CD8-positive, alpha-beta T cell (primary cell): ENCODE measurements at regions of chr3 and their contacts with region 1.

Region 1: DNA sequence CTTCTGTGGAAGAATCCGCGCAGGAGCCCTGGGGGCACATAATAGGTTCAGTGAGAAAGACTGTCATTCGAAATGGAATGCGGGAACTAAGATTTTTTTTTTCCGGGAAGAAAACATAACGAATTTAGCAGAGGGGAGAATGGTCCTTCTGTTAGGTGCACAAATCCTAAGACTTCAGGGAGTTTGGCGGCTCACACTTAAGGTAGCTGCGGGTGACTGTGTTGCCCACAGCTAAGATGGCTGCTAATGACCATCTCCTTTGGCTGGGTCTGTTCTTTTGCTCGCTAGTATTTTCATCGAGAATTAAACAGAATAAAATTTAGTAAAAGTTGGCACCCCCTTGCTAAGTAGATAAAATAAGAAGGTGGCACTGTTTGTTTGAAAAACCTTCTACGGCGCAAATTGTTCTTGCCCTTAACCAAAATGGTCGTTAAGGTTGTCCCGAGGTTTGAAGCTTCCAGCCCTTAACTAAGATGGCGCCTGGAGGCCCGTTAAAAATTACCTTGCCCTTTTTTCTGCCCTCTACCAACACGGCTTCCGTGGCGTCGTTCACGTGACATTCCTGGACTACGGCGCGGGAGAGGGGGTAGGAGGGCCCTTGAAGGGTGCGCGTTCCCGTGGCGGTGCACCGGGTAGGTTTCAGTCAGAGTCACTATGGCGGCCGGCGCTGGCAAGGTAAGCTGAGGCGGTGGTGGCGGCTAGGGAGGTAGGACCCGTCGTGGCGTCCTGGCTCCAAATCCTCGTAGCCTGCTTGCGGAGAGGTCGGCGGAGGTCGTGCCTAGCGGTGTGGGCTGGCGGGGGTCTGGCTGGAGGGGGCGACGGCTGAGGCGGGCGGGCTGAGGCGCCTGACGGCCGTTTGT is at the start of gene SLMAP:
- DNase-seq: peak; percentile 93 to 98 (median 96)
- ATAC-seq: peak; percentile 92
- H3K4me3 ChIP-seq: peak within 1 kb of the TSS; percentile 69 to 80
- H3K4me3 Mint-ChIP-seq: peak within 1 kb of the TSS; percentile 97
- H3K27ac ChIP-seq: peak within 1 kb of the TSS; percentile 45 to 79
- H3K27ac Mint-ChIP-seq: peak within 1 kb of the TSS; percentile 95
- H3K4me1 ChIP-seq: peaks cover 34% of the 10 kb centered on the region
- H3K4me1 Mint-ChIP-seq: peaks cover 44% of the 10 kb centered on the region
- H3K27me3 ChIP-seq: no peaks in the 10 kb centered on the region
- H3K27me3 Mint-ChIP-seq: no peaks in the 10 kb centered on the region
- CTCF ChIP-seq: no peak
- total RNA-seq, gene SLMAP: 55.0 to 56.7 TPM

Region 2: DNA sequence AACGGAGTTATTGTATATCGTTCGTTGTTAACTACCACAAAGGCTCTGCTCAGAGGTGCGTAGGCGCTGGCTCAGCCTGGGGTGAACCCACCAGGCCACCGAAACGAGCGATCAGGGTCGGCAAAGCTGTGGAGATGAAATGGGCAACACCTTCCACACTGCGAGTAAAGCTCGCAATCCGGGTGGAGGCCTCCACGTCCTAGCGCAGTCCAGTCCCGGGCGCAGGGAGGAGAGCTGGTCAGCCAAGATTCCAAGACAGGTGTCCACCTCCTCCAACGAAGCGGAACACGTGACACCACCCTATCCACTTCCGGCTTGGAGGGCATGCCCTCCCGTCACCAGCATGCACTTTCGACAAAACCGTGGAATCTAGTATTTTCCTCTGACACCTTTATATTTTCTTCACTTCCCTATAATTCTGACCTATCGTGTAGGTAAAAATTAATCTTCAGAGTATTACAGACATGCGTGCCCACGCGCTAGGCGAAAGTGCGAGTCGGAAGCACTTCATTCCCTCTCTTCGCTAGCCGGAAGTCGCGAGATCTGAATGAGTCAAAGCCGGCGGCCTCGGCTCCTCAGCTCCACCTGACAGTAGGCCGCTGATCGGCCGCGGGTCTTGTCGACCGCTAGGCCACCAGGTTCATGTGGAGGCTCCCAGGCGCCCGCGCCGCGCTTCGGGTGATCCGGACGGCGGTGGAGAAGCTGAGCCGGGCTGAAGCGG is 200.0 kb before region 1 on chr3 and contains the start of gene PDE12:
- CTCF ChIA-PET with region 1: no interaction called
- POLR2A ChIA-PET with region 1: interaction called, 8 read pairs
- intact Hi-C with region 1: loop called (anchors 1 kb)
- DNase-seq: peak; percentile 66 to 91 (median 81)
- ATAC-seq: peak; percentile 69
- H3K4me3 ChIP-seq: peak within 1 kb of the TSS; percentile 77 to 96
- H3K4me3 Mint-ChIP-seq: peak within 1 kb of the TSS; percentile 88
- H3K27ac ChIP-seq: peak within 1 kb of the TSS; percentile 87 to 98
- H3K27ac Mint-ChIP-seq: peak within 1 kb of the TSS; percentile 99
- H3K4me1 ChIP-seq: peaks cover 31% of the 10 kb centered on the region
- H3K4me1 Mint-ChIP-seq: peaks cover 40% of the 10 kb centered on the region
- H3K27me3 ChIP-seq: no peaks in the 10 kb centered on the region
- H3K27me3 Mint-ChIP-seq: no peaks in the 10 kb centered on the region
- CTCF ChIP-seq: no peak
- total RNA-seq, gene PDE12: 44.8 to 45.9 TPM

Region 3: GRCh38 chr3:57692259-57693147 is 63.4 kb before region 1 on chr3 and contains the start of gene DENND6A:
- CTCF ChIA-PET with region 1: no interaction called
- POLR2A ChIA-PET with region 1: interaction called, 25 read pairs
- intact Hi-C with region 1: loop called (anchors 1 kb)
- DNase-seq: peak; percentile 91 to 98 (median 96)
- ATAC-seq: peak; percentile 73
- H3K4me3 ChIP-seq: peak within 1 kb of the TSS; percentile 55 to 78
- H3K4me3 Mint-ChIP-seq: peak within 1 kb of the TSS; percentile 92
- H3K27ac ChIP-seq: peak within 1 kb of the TSS; percentile 69 to 95
- H3K27ac Mint-ChIP-seq: peak within 1 kb of the TSS; percentile 89
- H3K4me1 ChIP-seq: peaks cover 45% of the 10 kb centered on the region
- H3K4me1 Mint-ChIP-seq: peaks cover 42% of the 10 kb centered on the region
- H3K27me3 ChIP-seq: no peaks in the 10 kb centered on the region
- H3K27me3 Mint-ChIP-seq: no peaks in the 10 kb centered on the region
- CTCF ChIP-seq: no peak
- total RNA-seq, gene DENND6A: 74.6 to 79.3 TPM

Region 4: DNA sequence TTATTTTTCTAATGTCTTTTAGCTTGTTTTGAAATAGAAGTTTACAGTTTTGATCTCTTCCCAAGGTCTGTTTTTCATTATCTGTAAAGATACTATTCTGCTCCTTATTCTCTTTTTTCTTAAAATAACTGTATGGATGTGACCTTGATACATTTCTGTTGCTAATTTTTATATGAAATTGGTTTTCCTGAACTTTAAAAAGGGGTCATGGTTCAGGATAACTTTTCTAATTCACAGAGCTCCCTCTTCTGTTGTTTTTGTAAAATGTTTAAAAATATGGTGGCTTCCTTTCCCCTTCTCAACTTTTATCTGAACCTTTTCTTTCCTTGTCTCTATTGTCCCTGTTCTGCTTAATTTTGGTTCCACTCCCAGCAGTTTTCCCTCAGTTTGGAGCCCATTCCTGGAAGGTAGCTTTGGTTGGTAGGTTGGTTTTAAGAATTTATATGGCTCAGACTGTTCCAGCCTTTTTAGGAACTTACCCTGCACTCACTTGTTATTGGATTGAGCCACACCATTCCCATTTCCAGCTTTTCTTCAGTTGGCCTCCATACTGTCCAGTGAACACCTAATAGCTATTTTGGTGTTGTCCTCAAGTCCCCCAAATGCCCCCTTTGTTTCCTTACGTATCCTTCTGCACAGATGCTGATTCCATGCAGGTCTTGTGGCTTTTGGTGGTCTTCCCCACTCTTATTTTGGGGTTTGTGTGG is 70.5 kb after region 1 on chr3:
- CTCF ChIA-PET with region 1: no interaction called
- POLR2A ChIA-PET with region 1: no interaction called
- intact Hi-C with region 1: loop called in 1 of 2 experiments (anchors 2 kb)
- DNase-seq: no peak
- ATAC-seq: no peak
- H3K4me3 ChIP-seq: no peak overlapping the region
- H3K4me3 Mint-ChIP-seq: no peak overlapping the region
- H3K27ac ChIP-seq: no peak overlapping the region
- H3K27ac Mint-ChIP-seq: no peak overlapping the region
- H3K4me1 ChIP-seq: no peaks in the 10 kb centered on the region
- H3K4me1 Mint-ChIP-seq: peaks cover 24% of the 10 kb centered on the region
- H3K27me3 ChIP-seq: no peaks in the 10 kb centered on the region
- H3K27me3 Mint-ChIP-seq: no peaks in the 10 kb centered on the region
- CTCF ChIP-seq: no peak